K562 (cell line): ENCODE measurements at regions of chr17 and their contacts with region 1.

Region 1: GRCh38 chr17:43940630-43941029 is 1.6 kb downstream of the PPY start:
- DNase-seq: peak; percentile 55 to 71 (median 62)
- ATAC-seq: peak; percentile 81
- H3K4me3 ChIP-seq: no peak overlapping the region
- H3K27ac ChIP-seq: no peak overlapping the region
- H3K4me1 ChIP-seq: peaks cover 0 to 16% of the 10 kb centered on the region in 2 experiments; a peak in 4 of 5 replicates
- H3K27me3 ChIP-seq: peaks cover 0 to 21% of the 10 kb centered on the region in 2 experiments; a peak in 1 of 5 replicates
- CTCF ChIP-seq: peak; percentile 76 to 87 (median 79)
- EP300 ChIP-seq: no peak
- POLR2A ChIP-seq: no peak
- RAD21 ChIP-seq: peak; percentile 29 to 60

Region 2: DNA sequence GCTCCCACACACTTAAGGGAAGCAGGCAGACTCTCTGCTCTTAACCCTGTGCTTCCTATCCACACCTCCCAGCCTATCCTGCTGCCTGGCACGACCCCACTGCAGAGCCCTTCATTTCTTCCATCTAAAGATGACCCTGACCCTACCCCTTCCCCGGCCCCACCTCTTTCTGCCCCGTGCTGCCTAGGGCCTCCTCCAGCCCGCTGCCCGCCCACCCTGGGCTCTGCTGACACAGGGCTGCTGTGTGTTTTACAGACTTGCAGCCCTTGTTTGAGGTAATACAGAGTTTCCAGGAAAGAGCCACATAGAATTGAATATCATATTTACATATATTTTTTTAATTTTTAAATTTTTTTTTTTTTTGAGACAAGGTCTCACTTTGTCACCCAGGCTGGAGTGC is 320.9 kb before region 1 on chr17:
- CTCF ChIA-PET with region 1: no interaction called
- POLR2A ChIA-PET with region 1: no interaction called
- in situ Hi-C with region 1: no loop called
- intact Hi-C with region 1: no loop called
- DNase-seq: no peak
- ATAC-seq: no peak
- H3K4me3 ChIP-seq: no peak overlapping the region
- H3K27ac ChIP-seq: no peak overlapping the region
- H3K4me1 ChIP-seq: peaks cover 0 to 11% of the 10 kb centered on the region in 2 experiments; a peak in 1 of 5 replicates
- H3K27me3 ChIP-seq: peaks cover 15 to 30% of the 10 kb centered on the region in 2 experiments; a peak in 4 of 5 replicates
- CTCF ChIP-seq: no peak
- EP300 ChIP-seq: no peak
- POLR2A ChIP-seq: no peak
- RAD21 ChIP-seq: no peak

Region 3: DNA sequence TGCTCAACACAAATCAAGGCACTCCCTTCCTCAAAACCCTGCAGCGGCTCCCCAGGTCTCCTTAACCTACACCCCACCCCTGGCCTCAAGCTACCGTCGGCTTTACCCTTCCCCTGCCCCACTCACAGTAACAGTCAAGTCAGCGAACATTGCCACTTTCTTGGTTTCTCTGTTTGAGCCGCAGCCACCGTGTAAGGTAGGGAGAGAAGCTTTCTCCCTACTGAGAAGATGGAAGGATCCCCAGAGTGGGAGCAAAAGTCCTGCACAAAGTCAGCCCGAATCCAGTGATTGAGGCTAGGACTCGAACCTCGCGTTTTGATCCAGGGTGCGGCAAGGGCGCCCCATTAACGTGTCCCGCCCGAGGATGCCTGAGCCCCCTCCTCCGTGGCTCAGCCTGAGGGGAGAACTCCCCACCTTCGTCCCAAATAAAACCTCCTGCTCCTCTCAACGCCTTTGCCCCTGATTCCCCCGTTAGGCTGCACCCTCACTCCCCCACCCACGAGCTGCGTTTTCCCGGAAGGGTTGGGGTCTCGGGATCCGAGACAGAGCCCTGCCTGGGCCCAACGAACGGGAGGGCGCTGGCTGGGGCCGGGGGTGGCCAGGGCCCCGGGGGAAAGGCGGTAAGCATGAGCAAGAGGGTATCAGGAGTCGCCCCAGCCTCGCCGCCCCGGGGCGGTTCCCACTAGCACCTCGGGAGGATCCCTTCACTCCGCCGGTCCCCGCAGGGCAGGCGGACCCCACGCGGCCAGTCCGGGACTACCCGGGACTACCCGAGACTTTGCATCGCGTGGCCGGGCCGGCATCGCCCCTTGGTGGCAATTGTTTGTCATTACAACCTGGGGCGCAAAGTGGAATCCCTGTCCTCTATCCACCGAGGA is 53.9 kb after region 1 on chr17:
- CTCF ChIA-PET with region 1: interaction called, 37 read pairs
- POLR2A ChIA-PET with region 1: no interaction called
- in situ Hi-C with region 1: loop called (anchors 5 kb)
- intact Hi-C with region 1: loop called (anchors 1 kb)
- DNase-seq: peak; percentile 81 to 91 (median 86)
- ATAC-seq: peak; percentile 94
- H3K4me3 ChIP-seq: peak overlapping the region; percentile 3; the same call in 1 of the 2 replicates
- H3K27ac ChIP-seq: no peak overlapping the region
- H3K4me1 ChIP-seq: peaks cover 0 to 8% of the 10 kb centered on the region in 2 experiments; a peak in 2 of 5 replicates
- H3K27me3 ChIP-seq: peaks cover 0 to 8% of the 10 kb centered on the region in 2 experiments; a peak in 3 of 5 replicates
- CTCF ChIP-seq: peak; percentile 90 to 99 (median 97)
- EP300 ChIP-seq: no peak
- POLR2A ChIP-seq: no peak
- RAD21 ChIP-seq: peak; percentile 86 to 96

Region 4: DNA sequence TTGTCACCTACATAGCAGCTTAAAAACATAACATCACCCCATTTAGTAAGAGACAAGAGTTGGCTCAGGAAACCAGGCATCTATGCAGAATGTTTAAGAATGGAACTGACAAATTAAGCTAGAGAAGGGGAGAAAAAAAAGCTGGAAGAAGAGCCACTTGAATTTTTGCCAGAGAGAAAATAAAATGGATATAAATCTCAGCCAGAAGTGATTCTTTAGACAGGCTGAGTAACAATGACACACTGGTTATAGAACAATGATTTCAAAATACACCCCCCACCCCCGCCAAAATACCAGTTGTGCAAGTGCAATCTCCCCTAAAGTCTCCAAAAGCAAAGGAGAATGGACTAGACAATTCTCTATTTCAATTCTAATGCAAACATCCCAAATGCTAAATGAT is 103.4 kb after region 1 on chr17:
- CTCF ChIA-PET with region 1: interaction called, 19 read pairs
- POLR2A ChIA-PET with region 1: no interaction called
- in situ Hi-C with region 1: loop called (anchors 5 kb)
- intact Hi-C with region 1: loop called (anchors 1 kb)
- DNase-seq: no peak
- ATAC-seq: no peak
- H3K4me3 ChIP-seq: no peak overlapping the region
- H3K27ac ChIP-seq: no peak overlapping the region
- H3K4me1 ChIP-seq: peaks cover 0 to 2% of the 10 kb centered on the region in 2 experiments; a peak in 1 of 5 replicates
- H3K27me3 ChIP-seq: no peaks in the 10 kb centered on the region
- CTCF ChIP-seq: no peak
- EP300 ChIP-seq: no peak
- POLR2A ChIP-seq: no peak
- RAD21 ChIP-seq: no peak

Region 5: GRCh38 chr17:44167181-44167861 is 226.7 kb after region 1 on chr17:
- CTCF ChIA-PET with region 1: interaction called, 3 read pairs
- POLR2A ChIA-PET with region 1: no interaction called
- in situ Hi-C with region 1: no loop called
- intact Hi-C with region 1: loop called (anchors 5 kb)
- DNase-seq: no peak
- ATAC-seq: no peak
- H3K4me3 ChIP-seq: no peak overlapping the region
- H3K27ac ChIP-seq: no peak overlapping the region
- H3K4me1 ChIP-seq: peaks cover 13 to 26% of the 10 kb centered on the region in 2 experiments; a peak in 4 of 5 replicates
- H3K27me3 ChIP-seq: no peaks in the 10 kb centered on the region
- CTCF ChIP-seq: no peak
- EP300 ChIP-seq: no peak
- POLR2A ChIP-seq: no peak
- RAD21 ChIP-seq: no peak

Region 6: GRCh38 chr17:44344939-44345453 is 404.4 kb after region 1 on chr17 and contains the start of gene GRN:
- CTCF ChIA-PET with region 1: no interaction called
- POLR2A ChIA-PET with region 1: no interaction called
- in situ Hi-C with region 1: loop called (anchors 25 kb)
- intact Hi-C with region 1: no loop called
- DNase-seq: peak; percentile 96 to 99 (median 99)
- ATAC-seq: peak; percentile 100
- H3K4me3 ChIP-seq: peak within 1 kb of the TSS; percentile 65
- H3K27ac ChIP-seq: peak within 1 kb of the TSS; percentile 44
- H3K4me1 ChIP-seq: peaks cover 14 to 33% of the 10 kb centered on the region in 2 experiments; a peak in 3 of 5 replicates
- H3K27me3 ChIP-seq: no peaks in the 10 kb centered on the region; a peak in 1 of 5 replicates
- CTCF ChIP-seq: no peak
- EP300 ChIP-seq: 0 out of 2 replicates have a peak, but pooled peaks have one; percentile 28
- POLR2A ChIP-seq: peak; percentile 78
- RAD21 ChIP-seq: no peak
- polyA plus RNA-seq, gene GRN: 5.4 to 5.9 TPM